ENCODE measurements at regions of chr10 and their contacts with region 1.

Region 1: DNA sequence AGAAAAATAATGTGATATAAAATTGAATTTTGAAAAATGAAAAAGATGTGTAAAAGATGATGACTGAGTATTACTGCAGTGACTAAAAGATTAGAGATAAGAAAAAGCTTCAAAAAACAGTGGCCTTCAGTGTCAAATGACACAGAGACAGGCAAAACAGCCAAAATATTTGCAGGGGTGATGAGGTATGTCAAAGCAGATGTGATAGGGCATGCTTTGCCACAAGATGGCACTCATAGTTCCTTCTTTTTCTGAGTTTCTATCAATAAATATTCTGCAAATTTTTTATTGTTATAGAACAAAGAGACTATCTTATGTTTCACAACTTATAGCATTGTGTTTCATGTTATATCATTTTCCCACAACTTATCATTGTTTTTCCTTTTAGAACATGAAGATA is 344.1 kb upstream of the HPS1 start:
- DNase-seq: no peak
- ATAC-seq: no peak
- H3K4me3 ChIP-seq: no peak overlapping the region
- H3K27ac ChIP-seq: no peak overlapping the region
- H3K4me1 ChIP-seq: no peaks in the 10 kb centered on the region
- H3K27me3 ChIP-seq: peaks cover 6% of the 10 kb centered on the region
- CTCF ChIP-seq: peak; percentile 55; the same call in 1 of the 2 replicates

Region 2: GRCh38 chr10:98808282-98808892 is 17.6 kb after region 1 on chr10:
- CTCF ChIA-PET with region 1: no interaction called
- POLR2A ChIA-PET with region 1: no interaction called
- in situ Hi-C with region 1: no loop called
- intact Hi-C with region 1: no loop called
- DNase-seq: no peak
- ATAC-seq: no peak
- H3K4me3 ChIP-seq: no peak overlapping the region
- H3K27ac ChIP-seq: no peak overlapping the region
- H3K4me1 ChIP-seq: no peaks in the 10 kb centered on the region
- H3K27me3 ChIP-seq: no peaks in the 10 kb centered on the region
- CTCF ChIP-seq: no peak

Region 3: GRCh38 chr10:99042051-99042771 is 251.4 kb after region 1 on chr10:
- CTCF ChIA-PET with region 1: no interaction called
- POLR2A ChIA-PET with region 1: no interaction called
- in situ Hi-C with region 1: no loop called
- intact Hi-C with region 1: loop called (anchors 5 kb)
- DNase-seq: no peak
- ATAC-seq: no peak; the same call in 1 of the 2 replicates
- H3K4me3 ChIP-seq: no peak overlapping the region
- H3K27ac ChIP-seq: no peak overlapping the region
- H3K4me1 ChIP-seq: no peaks in the 10 kb centered on the region
- H3K27me3 ChIP-seq: no peaks in the 10 kb centered on the region; the same call in none of the 2 replicates
- CTCF ChIP-seq: no peak

Region 4: GRCh38 chr10:99248824-99249223 is 458.0 kb after region 1 on chr10:
- CTCF ChIA-PET with region 1: no interaction called
- POLR2A ChIA-PET with region 1: no interaction called
- in situ Hi-C with region 1: no loop called
- intact Hi-C with region 1: loop called (anchors 5 kb)
- DNase-seq: no peak
- ATAC-seq: no peak
- H3K4me3 ChIP-seq: no peak overlapping the region
- H3K27ac ChIP-seq: no peak overlapping the region
- H3K4me1 ChIP-seq: no peaks in the 10 kb centered on the region
- H3K27me3 ChIP-seq: no peaks in the 10 kb centered on the region
- CTCF ChIP-seq: no peak

Region 5: DNA sequence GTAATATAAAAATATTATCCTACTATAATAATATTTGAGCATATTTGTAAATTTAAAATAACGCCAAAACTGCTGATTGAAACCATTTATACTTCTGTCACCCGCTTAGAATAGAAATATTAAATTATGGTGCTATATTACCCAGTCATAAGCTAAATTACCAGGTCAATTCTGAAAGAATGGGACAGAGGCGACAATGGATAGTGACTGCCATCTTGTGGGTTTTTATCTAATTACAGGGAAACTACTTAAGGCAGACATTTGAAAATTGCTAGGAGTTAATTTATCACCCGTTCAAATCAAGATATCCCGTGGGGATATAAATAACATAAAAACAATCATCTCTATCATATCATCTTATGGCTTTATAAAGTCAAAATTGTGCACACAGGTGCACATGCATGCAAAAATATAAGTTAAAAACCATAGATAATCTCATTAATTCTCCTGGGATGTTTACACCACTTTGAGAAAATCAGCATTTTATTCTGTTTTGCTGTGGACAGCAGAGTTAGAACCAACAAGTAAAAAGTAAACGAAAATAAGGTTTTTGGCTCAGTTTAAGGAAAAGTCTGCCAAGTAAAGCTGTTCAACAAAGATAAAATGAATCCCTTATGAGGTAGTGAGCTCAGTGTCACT is 486.2 kb after region 1 on chr10:
- CTCF ChIA-PET with region 1: no interaction called
- POLR2A ChIA-PET with region 1: no interaction called
- in situ Hi-C with region 1: no loop called
- intact Hi-C with region 1: loop called (anchors 10 kb)
- DNase-seq: peak; percentile 22
- ATAC-seq: peak; percentile 73; the same call in 1 of the 2 replicates
- H3K4me3 ChIP-seq: no peak overlapping the region
- H3K27ac ChIP-seq: no peak overlapping the region
- H3K4me1 ChIP-seq: no peaks in the 10 kb centered on the region
- H3K27me3 ChIP-seq: peaks cover 7% of the 10 kb centered on the region; the same call in 1 of the 2 replicates
- CTCF ChIP-seq: peak; percentile 80; the same call in 1 of the 2 replicates